Endothelial cell of umbilical vein (primary cell): ENCODE measurements at regions of chr5 and their contacts with region 1.

Region 1: DNA sequence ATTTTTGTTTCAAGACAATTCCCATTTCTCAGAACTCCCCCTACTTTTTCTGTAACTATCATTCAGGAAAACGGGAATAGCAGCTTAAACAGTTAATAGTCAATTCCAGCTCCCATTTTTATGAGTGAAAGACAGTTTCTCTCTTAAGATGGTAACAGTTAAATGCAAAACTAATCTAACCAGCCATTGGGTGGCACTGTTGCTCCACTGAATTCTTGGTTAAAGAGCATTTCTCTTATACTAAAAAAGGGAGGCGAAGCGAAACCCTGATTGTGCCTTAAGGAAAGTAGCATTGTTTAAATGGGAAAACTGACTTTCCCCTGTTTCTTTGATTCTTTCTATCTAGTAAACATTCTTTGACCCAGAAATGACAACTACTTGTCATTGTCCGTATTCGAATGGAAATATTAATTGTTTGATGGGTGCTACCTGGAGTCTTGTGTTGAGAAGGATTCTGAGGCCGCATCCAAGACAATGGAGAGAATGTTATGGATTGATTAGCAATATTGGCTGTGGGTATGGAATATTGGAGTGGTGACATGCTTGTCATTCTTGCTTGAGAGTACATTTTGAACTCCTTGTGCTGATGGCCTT is 507.8 kb downstream of the MAT2B start:
- DNase-seq: peak; percentile 88
- H3K4me3 ChIP-seq: no peak overlapping the region
- H3K27ac ChIP-seq: peak overlapping the region; percentile 47
- H3K4me1 ChIP-seq: peaks cover 11% of the 10 kb centered on the region
- H3K27me3 ChIP-seq: no peaks in the 10 kb centered on the region
- CTCF ChIP-seq: peak; percentile 45 to 59
- POLR2A ChIP-seq: no peak

Region 2: DNA sequence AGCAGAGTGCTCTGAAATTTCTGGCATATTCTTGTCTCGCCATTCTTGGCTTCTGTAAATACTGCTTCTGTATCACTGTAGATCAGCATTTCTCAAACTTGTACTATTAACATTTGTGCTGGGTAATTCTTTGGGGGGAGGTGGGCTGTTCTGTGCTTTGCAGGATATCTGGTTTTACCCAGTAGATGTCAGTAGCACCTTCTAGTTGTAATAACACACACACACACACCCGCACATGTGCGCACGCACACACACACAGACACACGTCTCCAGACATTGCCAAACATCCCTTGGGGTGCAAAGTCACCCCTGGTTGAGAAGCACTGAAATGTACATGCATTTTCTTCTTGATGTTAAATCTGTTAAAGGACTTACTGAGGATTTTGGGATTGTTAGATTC is 203.7 kb before region 1 on chr5:
- CTCF ChIA-PET with region 1: interaction called, 9 read pairs
- POLR2A ChIA-PET with region 1: no interaction called
- dilution Hi-C with region 1: no loop called
- intact Hi-C with region 1: loop called (anchors 1 kb)
- DNase-seq: peak; percentile 63
- H3K4me3 ChIP-seq: no peak overlapping the region
- H3K27ac ChIP-seq: no peak overlapping the region
- H3K4me1 ChIP-seq: peaks cover 11% of the 10 kb centered on the region
- H3K27me3 ChIP-seq: no peaks in the 10 kb centered on the region
- CTCF ChIP-seq: peak in 1 of 2 donors; percentile 15
- POLR2A ChIP-seq: no peak

Region 3: DNA sequence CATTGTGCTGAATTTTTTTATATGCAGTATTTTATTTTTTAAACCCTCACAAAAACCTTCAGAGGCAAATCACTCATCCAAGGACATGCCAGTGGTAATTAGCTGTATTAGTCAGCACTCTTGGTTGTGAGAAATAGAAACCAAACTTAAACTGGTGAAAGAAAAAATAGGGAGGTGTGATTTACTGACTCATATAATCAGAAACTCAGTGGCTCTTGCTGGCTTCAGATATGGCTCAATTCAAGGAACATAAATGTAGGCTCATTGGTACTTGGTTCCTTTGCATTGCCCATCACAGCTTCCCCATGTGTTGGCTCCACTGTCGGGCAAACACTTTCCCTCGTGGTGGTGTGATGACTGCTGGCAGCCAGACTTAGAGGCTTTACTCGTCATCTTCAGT is 10.5 kb before region 1 on chr5:
- CTCF ChIA-PET with region 1: interaction called, 33 read pairs
- POLR2A ChIA-PET with region 1: no interaction called
- dilution Hi-C with region 1: no loop called
- intact Hi-C with region 1: no loop called
- DNase-seq: no peak
- H3K4me3 ChIP-seq: no peak overlapping the region
- H3K27ac ChIP-seq: no peak overlapping the region
- H3K4me1 ChIP-seq: no peaks in the 10 kb centered on the region
- H3K27me3 ChIP-seq: no peaks in the 10 kb centered on the region
- CTCF ChIP-seq: no peak
- POLR2A ChIP-seq: no peak

Region 4: GRCh38 chr5:164422400-164422799 is 409.2 kb after region 1 on chr5:
- CTCF ChIA-PET with region 1: interaction called, 8 read pairs
- POLR2A ChIA-PET with region 1: no interaction called
- dilution Hi-C with region 1: no loop called
- intact Hi-C with region 1: loop called (anchors 1 kb)
- DNase-seq: peak; percentile 43
- H3K4me3 ChIP-seq: no peak overlapping the region
- H3K27ac ChIP-seq: no peak overlapping the region
- H3K4me1 ChIP-seq: no peaks in the 10 kb centered on the region
- H3K27me3 ChIP-seq: no peaks in the 10 kb centered on the region
- CTCF ChIP-seq: peak in 1 of 2 donors; percentile 36
- POLR2A ChIP-seq: no peak

Region 5: DNA sequence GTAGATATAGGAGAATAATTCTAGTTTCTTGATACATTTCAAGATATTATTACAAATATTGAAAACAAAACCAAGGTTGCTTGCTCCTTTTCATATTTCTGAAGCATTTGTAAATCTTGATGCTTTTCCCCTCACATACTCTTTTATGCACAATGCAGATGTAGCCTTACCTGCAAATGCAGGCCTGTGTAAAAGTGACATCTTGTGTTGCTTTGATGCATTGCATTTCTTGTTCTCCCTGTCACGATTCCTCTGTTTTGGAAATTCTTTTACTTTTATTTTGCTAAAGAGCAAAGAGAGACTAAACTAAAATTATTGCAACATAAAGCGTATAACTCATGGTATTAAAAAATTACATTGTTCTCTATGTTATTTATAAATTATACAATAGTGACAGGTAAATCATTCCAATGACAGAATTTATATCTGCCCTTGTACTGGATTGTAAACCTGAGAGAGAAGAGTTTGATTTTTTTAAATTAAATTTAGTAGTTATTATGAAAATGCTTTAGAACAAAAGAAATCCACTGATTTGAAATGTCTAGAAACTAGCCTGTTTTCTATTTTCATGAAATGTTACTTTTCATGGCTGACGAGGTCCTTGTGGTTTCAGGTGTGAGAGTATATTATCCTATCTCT is 462.3 kb after region 1 on chr5:
- CTCF ChIA-PET with region 1: interaction called, 35 read pairs
- POLR2A ChIA-PET with region 1: no interaction called
- dilution Hi-C with region 1: no loop called
- intact Hi-C with region 1: loop called (anchors 1 kb)
- DNase-seq: peak; percentile 47
- H3K4me3 ChIP-seq: no peak overlapping the region
- H3K27ac ChIP-seq: no peak overlapping the region
- H3K4me1 ChIP-seq: no peaks in the 10 kb centered on the region
- H3K27me3 ChIP-seq: no peaks in the 10 kb centered on the region
- CTCF ChIP-seq: peak in 1 of 2 donors; percentile 45
- POLR2A ChIP-seq: no peak